CD8-positive, alpha-beta T cell (primary cell): ENCODE measurements at regions of chr17 and their contacts with region 1.

Region 1: DNA sequence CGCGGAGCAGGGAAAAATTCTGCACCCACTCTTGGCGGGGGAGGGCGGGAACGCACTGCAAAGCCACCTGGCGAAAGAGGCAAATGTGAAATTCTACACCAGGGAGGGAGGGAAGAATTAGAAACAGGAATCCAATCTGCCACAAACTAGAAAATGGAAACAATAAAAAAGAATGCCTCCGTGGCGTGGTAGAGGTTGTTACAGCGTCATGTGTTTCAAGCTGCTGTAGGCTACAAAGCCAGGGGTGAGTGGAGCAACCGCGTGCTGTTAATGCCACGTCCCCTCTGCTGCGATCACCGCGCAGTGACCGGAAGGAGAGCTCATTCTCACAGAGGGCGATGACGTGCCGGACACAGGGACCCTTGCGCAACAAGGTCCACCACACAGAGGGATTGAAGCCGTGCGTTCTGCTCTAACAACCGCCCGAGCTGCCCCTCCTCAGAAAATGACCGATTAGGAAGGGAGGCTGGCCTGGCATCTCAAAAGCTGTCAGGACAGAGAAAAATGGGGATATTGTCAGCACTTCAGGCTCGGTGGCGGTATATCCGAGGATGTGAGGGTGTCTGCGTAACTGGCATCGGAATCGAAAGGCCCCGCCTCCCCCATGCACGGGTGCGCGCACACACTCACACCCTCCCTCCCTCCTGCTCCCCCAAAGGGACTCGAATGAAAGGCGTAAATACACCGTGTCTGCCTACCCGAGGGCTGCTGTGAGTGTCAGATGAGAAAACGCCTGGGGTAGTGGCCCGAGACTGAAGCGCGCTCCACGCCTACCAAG is 70.8 kb upstream of the TNRC6C start:
- DNase-seq: peak; percentile 64 to 96 (median 84)
- ATAC-seq: peak; percentile 93
- H3K4me3 ChIP-seq: peak overlapping the region; percentile 54 to 66
- H3K4me3 Mint-ChIP-seq: peak overlapping the region; percentile 92
- H3K27ac ChIP-seq: peak overlapping the region; percentile 87 to 90
- H3K27ac Mint-ChIP-seq: peak overlapping the region; percentile 99
- H3K4me1 ChIP-seq: peaks cover 41% of the 10 kb centered on the region
- H3K4me1 Mint-ChIP-seq: peaks cover 59% of the 10 kb centered on the region
- H3K27me3 ChIP-seq: no peaks in the 10 kb centered on the region
- H3K27me3 Mint-ChIP-seq: no peaks in the 10 kb centered on the region
- CTCF ChIP-seq: no peak

Region 2: GRCh38 chr17:77755410-77755963 is 132.2 kb before region 1 on chr17:
- CTCF ChIA-PET with region 1: no interaction called
- POLR2A ChIA-PET with region 1: no interaction called
- intact Hi-C with region 1: no loop called
- DNase-seq: no peak
- ATAC-seq: no peak
- H3K4me3 ChIP-seq: no peak overlapping the region
- H3K4me3 Mint-ChIP-seq: no peak overlapping the region
- H3K27ac ChIP-seq: no peak overlapping the region
- H3K27ac Mint-ChIP-seq: no peak overlapping the region
- H3K4me1 ChIP-seq: no peaks in the 10 kb centered on the region
- H3K4me1 Mint-ChIP-seq: no peaks in the 10 kb centered on the region
- H3K27me3 ChIP-seq: no peaks in the 10 kb centered on the region
- H3K27me3 Mint-ChIP-seq: no peaks in the 10 kb centered on the region
- CTCF ChIP-seq: no peak

Region 3: DNA sequence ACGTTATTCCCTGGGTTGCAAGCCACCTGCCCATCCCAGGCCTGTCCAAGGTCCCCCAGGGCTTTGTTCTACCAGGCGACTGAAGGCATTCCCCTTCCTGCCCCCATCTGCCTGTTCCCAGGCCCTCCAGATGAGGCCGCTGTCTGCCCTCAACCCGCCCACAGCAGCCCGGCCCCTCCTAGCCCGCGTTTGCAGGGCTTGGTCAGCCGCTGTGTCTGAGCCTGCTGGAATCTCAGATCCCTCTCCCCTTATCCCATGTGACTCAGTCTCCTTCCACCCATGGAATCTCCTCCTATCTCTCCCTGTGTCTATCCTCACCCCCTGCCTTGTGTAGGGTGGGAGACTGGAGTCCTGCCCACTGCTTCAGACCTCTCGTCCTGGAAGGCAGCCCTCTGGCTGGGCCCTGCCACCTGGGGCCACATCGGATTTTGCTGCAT is 115.2 kb before region 1 on chr17:
- CTCF ChIA-PET with region 1: no interaction called
- POLR2A ChIA-PET with region 1: no interaction called
- intact Hi-C with region 1: loop called in 1 of 2 experiments (anchors 2 kb)
- DNase-seq: peak; percentile 46 to 82 (median 67)
- ATAC-seq: peak; percentile 95
- H3K4me3 ChIP-seq: no peak overlapping the region
- H3K4me3 Mint-ChIP-seq: no peak overlapping the region
- H3K27ac ChIP-seq: no peak overlapping the region
- H3K27ac Mint-ChIP-seq: peak overlapping the region; percentile 73
- H3K4me1 ChIP-seq: peaks cover 7% of the 10 kb centered on the region
- H3K4me1 Mint-ChIP-seq: peaks cover 13% of the 10 kb centered on the region
- H3K27me3 ChIP-seq: no peaks in the 10 kb centered on the region
- H3K27me3 Mint-ChIP-seq: no peaks in the 10 kb centered on the region
- CTCF ChIP-seq: peak; percentile 74

Region 4: DNA sequence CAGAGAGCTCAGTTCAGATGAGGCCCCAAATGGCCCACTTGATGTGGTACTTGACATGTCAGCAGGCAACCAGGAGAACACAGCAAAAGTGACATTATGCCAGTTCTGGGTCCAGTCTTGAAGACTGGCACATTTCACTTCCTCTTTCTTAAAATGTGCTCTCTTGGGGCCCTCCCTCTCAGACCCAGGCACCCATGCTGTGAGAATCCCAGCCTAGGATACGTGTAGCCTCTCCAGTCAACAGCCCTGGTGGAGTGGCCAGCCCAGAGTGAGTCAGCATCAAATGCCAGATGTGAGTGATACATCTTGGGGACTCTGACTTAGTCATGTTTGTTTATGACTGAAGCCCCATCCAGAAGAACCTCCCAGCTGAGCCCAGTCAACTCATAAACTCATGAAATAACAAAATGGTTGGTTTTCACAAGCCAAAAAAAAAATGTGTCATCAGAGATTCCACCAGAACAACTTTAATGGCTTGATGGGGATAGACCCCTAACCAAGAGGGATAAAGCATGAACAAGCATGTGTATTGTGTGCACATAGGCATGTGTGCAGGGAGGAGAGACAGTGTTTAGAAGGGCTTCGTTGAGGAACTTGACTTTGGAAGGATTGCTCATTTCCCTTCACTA is 11.7 kb before region 1 on chr17:
- CTCF ChIA-PET with region 1: interaction called, 3 read pairs
- POLR2A ChIA-PET with region 1: interaction called, 7 read pairs
- intact Hi-C with region 1: loop called in 1 of 2 experiments (anchors 2 kb)
- DNase-seq: no peak
- ATAC-seq: no peak
- H3K4me3 ChIP-seq: no peak overlapping the region
- H3K4me3 Mint-ChIP-seq: peak overlapping the region; percentile 26
- H3K27ac ChIP-seq: no peak overlapping the region
- H3K27ac Mint-ChIP-seq: peak overlapping the region; percentile 32
- H3K4me1 ChIP-seq: peaks cover 97% of the 10 kb centered on the region
- H3K4me1 Mint-ChIP-seq: peaks cover 88% of the 10 kb centered on the region
- H3K27me3 ChIP-seq: no peaks in the 10 kb centered on the region
- H3K27me3 Mint-ChIP-seq: no peaks in the 10 kb centered on the region
- CTCF ChIP-seq: no peak